SK-N-SH (cell line): ENCODE measurements at regions of chr17 and their contacts with region 1.

Region 1: DNA sequence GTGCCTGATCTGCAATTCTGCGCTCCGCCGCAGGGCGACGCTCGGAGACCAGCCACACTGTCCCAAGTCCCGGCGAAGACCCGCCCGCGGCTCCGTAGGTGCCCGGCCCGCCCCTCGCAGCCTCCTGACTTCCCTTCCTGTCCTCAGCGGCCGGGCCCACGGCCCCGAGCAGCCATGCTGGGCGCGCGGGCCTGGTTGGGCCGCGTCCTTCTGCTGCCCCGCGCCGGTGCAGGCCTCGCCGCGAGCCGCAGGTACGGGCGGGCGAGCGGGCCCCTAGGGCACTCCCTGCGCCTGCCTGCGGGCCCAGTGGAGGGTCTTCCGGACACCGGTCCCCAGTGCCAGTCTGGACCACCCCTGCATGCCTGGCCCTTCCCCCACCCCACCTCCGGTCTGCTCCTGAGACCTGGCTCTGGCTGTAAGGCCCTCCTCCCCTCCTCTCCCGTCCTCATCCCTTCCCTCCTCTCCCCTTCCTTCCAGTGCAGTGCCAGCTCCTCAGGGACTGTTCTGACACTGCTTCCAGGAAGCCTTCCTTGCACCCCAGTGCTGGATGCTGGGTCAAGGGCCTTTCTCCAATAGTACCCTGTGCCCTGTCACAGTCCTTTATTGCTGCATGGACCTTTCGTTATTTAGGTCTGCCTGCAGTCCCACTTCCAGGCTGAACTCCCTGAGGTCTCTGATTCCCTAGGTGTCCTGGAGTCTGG is at the start of gene SPATA20:
- DNase-seq: peak; percentile 99
- H3K4me3 ChIP-seq: peak within 1 kb of the TSS; percentile 70 to 76
- H3K27ac ChIP-seq: peak within 1 kb of the TSS in 1 of 2 experiments; percentile 78; a peak in 2 of 4 replicates
- H3K4me1 ChIP-seq: peaks cover 7 to 30% of the 10 kb centered on the region in 2 experiments; a peak in 3 of 4 replicates
- H3K27me3 ChIP-seq: no peaks in the 10 kb centered on the region
- CTCF ChIP-seq: peak; percentile 99
- EP300 ChIP-seq: 0 out of 4 replicates have a peak, but pooled peaks of 1 of the 2 experiments have one; percentile 22
- RAD21 ChIP-seq: peak; percentile 100
- polyA plus RNA-seq, gene SPATA20: 92.0 and 106 TPM in 2 replicates

Region 2: GRCh38 chr17:50426814-50427787 is 120.1 kb before region 1 on chr17:
- CTCF ChIA-PET with region 1: no interaction called
- POLR2A ChIA-PET with region 1: no interaction called
- DNase-seq: peak; percentile 72
- H3K4me3 ChIP-seq: peak overlapping the region; percentile 69 to 71
- H3K27ac ChIP-seq: peak overlapping the region; percentile 39 to 70
- H3K4me1 ChIP-seq: peaks cover 21 to 23% of the 10 kb centered on the region in 2 experiments; a peak in 3 of 4 replicates
- H3K27me3 ChIP-seq: no peaks in the 10 kb centered on the region
- CTCF ChIP-seq: peak; percentile 69
- EP300 ChIP-seq: no peak
- RAD21 ChIP-seq: no peak

Region 3: GRCh38 chr17:50478391-50479381 is 68.5 kb before region 1 on chr17 and contains the start of gene RSAD1:
- CTCF ChIA-PET with region 1: interaction called, 36 read pairs
- POLR2A ChIA-PET with region 1: no interaction called
- DNase-seq: peak; percentile 98
- H3K4me3 ChIP-seq: peak within 1 kb of the TSS; percentile 80 to 90
- H3K27ac ChIP-seq: peak within 1 kb of the TSS; percentile 79 to 88
- H3K4me1 ChIP-seq: peaks cover 10 to 17% of the 10 kb centered on the region in 2 experiments; a peak in 2 of 4 replicates
- H3K27me3 ChIP-seq: no peaks in the 10 kb centered on the region
- CTCF ChIP-seq: peak; percentile 94
- EP300 ChIP-seq: peak; percentile 20 to 32; a peak in 2 of 4 replicates
- RAD21 ChIP-seq: peak; percentile 53
- polyA plus RNA-seq, gene RSAD1: 44.7 and 58.9 TPM in 2 replicates

Region 4: GRCh38 chr17:50570528-50570927 is 23.3 kb after region 1 on chr17:
- CTCF ChIA-PET with region 1: interaction called, 127 read pairs
- POLR2A ChIA-PET with region 1: no interaction called
- DNase-seq: no peak
- H3K4me3 ChIP-seq: no peak overlapping the region
- H3K27ac ChIP-seq: no peak overlapping the region
- H3K4me1 ChIP-seq: peaks cover under 1 to 44% of the 10 kb centered on the region in 2 experiments; a peak in 3 of 4 replicates
- H3K27me3 ChIP-seq: no peaks in the 10 kb centered on the region; the same call in 1 of the 2 replicates
- CTCF ChIP-seq: no peak
- EP300 ChIP-seq: no peak
- RAD21 ChIP-seq: no peak

Region 5: DNA sequence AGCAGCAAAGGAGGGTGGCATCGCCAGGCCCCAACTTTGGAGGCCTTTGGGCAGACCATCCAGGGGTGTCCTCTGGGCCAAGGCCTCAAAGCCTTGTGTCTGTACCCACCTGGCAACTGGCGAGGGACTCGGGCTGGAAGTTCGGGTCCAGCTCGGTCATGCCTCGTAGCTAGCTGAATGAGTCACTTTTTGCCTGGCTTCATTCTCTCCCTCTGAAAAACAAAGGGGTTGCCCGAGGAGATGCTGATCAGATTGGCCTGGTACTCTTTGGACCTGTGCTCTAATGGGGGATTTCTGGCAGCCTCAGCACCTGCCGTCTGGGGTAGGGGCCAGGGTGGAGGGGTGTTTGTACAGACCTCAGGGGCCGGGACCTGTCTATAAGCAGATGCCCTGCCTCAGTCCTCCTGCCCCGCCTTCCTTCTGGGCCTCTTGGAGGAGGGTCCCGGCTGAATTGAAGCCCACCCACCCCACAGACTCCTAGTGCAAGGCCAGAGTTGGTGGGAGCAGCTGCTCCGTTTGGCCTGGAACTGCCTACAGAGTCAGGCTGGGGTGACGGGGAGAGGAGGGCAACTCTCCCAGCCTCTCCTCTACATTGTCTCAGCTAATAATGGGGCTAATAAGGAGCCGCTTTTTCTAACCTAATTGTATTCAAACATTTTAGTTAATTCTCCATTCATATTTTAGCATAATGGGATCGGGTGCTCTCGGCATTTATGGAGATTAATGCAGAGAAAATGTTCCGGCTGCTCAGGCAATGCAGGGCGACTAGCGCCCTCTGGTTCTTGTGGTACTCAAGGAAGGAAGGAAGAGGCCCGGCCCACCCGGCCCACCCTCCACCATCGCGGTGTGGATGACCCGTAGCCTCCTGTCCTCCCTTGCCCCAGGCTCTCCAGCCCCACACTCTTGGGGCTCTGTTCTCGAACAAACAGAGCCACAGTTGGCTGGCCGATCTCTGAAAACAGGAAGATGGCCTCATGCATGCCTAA is 66.1 kb after region 1 on chr17:
- CTCF ChIA-PET with region 1: interaction called, 1,212 read pairs
- POLR2A ChIA-PET with region 1: no interaction called
- DNase-seq: peak; percentile 67
- H3K4me3 ChIP-seq: no peak overlapping the region
- H3K27ac ChIP-seq: no peak overlapping the region
- H3K4me1 ChIP-seq: peaks cover 0 to 34% of the 10 kb centered on the region in 2 experiments; a peak in 1 of 4 replicates
- H3K27me3 ChIP-seq: no peaks in the 10 kb centered on the region
- CTCF ChIP-seq: no peak
- EP300 ChIP-seq: no peak
- RAD21 ChIP-seq: peak; percentile 46

Region 6: GRCh38 chr17:50661795-50662391 is 114.7 kb after region 1 on chr17:
- CTCF ChIA-PET with region 1: interaction called, 32 read pairs
- POLR2A ChIA-PET with region 1: no interaction called
- DNase-seq: peak; percentile 73
- H3K4me3 ChIP-seq: no peak overlapping the region
- H3K27ac ChIP-seq: peak overlapping the region; percentile 77
- H3K4me1 ChIP-seq: peaks cover 39 to 44% of the 10 kb centered on the region in 2 experiments
- H3K27me3 ChIP-seq: no peaks in the 10 kb centered on the region
- CTCF ChIP-seq: no peak
- EP300 ChIP-seq: peak; percentile 40 to 93; a peak in 1 of 4 replicates
- RAD21 ChIP-seq: no peak

Region 7: GRCh38 chr17:50697663-50698274 is 150.6 kb after region 1 on chr17:
- CTCF ChIA-PET with region 1: interaction called, 356 read pairs
- POLR2A ChIA-PET with region 1: interaction called, 3 read pairs
- DNase-seq: no peak
- H3K4me3 ChIP-seq: no peak overlapping the region
- H3K27ac ChIP-seq: no peak overlapping the region
- H3K4me1 ChIP-seq: peaks cover 10 to 25% of the 10 kb centered on the region in 2 experiments
- H3K27me3 ChIP-seq: no peaks in the 10 kb centered on the region
- CTCF ChIP-seq: no peak; the same call in 1 of the 2 replicates
- EP300 ChIP-seq: no peak
- RAD21 ChIP-seq: peak; percentile 31